Psoas muscle (tissue), 8 donors: ENCODE measurements at regions of chr19 and their contacts with region 1.

Region 1: GRCh38 chr19:57389730-57390598 is at the start of gene ZNF548:
- DNase-seq: peak; percentile 97 to 98
- ATAC-seq: peak; percentile 99
- H3K4me3 ChIP-seq: peak within 1 kb of the TSS; percentile 90
- H3K27ac ChIP-seq: peak within 1 kb of the TSS; percentile 93
- H3K4me1 ChIP-seq: peaks cover 7% of the 10 kb centered on the region
- H3K27me3 ChIP-seq: no peaks in the 10 kb centered on the region
- CTCF ChIP-seq: peak; percentile 24
- total RNA-seq, gene ZNF548: 5.6 to 12.1 (median 8.3) TPM

Region 2: DNA sequence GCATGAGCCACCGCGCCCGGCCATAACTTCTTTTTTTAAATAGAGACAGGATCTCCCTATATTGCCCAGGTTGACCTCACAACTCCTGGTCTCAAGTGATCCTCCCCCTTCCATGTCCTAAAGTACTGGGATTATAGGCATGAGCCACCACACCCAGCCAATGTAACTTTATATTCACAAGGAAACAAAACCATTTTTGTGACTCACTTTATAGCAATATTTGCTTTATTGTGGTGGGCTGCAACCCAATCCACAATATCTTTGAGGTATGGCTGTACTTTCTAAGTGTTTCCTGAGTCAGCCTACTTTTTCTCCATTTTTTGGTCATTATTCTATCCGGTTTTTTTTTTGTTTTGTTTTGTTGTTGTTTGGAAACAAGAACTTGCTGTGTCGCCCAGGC is 237.0 kb before region 1 on chr19:
- intact Hi-C with region 1: no loop called
- DNase-seq: no peak
- ATAC-seq: no peak
- H3K4me3 ChIP-seq: no peak overlapping the region
- H3K27ac ChIP-seq: no peak overlapping the region
- H3K4me1 ChIP-seq: no peaks in the 10 kb centered on the region
- H3K27me3 ChIP-seq: no peaks in the 10 kb centered on the region
- CTCF ChIP-seq: no peak

Region 3: DNA sequence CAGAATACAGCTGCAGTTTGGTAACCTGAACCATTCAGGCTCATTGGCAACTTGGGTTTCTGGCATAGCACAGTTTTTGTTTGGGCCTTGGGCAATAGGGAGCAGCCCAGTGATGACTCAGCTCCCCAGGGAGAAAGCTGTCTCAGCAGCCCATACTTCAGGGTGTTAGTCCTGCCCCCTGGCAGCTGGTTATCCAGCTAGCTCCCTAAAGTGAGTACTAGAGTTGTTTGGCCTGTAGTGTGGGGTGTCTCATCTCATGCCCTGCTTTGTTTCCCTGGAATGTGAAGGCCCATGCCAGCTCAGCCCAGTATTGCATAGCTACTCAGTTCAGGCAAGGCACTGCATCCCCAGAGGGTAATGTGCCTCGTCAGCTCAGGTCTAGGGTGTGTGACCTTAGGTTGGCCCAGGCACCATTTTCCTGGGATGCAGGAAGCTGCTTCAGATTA is 87.9 kb before region 1 on chr19:
- intact Hi-C with region 1: no loop called
- DNase-seq: peak; percentile 74 to 89
- ATAC-seq: peak; percentile 96 to 98 (median 97)
- H3K4me3 ChIP-seq: no peak overlapping the region
- H3K27ac ChIP-seq: peak overlapping the region; percentile 68
- H3K4me1 ChIP-seq: peaks cover 19% of the 10 kb centered on the region
- H3K27me3 ChIP-seq: no peaks in the 10 kb centered on the region
- CTCF ChIP-seq: no peak

Region 4: DNA sequence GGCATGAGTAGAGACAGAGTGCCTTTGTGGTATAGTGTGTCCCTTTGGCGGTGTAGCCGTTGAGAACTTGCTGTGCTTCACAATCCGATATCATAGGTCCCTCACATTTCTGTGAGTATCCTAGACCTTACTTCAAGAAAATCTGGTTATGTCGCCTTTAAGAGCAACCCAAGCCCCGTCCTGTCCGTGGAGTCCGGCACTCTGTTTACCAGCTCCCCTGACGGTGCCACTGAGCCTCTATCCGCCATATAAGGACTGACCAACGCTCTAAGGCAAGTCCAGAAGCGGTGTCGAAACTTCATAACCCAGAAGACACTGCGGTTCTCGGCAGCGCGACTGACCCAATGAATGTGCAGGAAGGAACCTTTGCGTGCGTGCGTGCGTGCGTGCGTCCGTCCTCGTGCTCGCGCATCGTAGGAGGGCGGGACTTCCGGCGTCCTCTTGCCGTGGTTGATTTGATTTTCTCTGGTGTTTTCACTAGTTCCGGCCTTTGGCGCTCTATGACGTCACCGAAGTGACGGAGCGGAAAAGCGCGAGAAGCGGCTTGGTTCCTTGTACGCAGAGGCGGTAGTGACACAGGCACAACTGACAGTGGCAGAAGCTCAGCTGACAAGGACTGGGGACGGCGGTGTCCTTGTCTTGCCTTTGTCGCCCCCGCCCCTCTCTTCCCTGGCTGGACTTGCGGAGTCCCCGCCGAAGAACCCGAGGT is 26.8 kb before region 1 on chr19 and contains the starts of genes TRAPPC2B and ZNF547:
- intact Hi-C with region 1: loop called in 1 of 2 experiments (anchors 2 kb)
- DNase-seq: peak; percentile 99 to 100
- ATAC-seq: peak; percentile 94 to 96 (median 95)
- H3K4me3 ChIP-seq: peak within 1 kb of the TSS; percentile 91
- H3K27ac ChIP-seq: peak within 1 kb of the TSS; percentile 98
- H3K4me1 ChIP-seq: no peaks in the 10 kb centered on the region
- H3K27me3 ChIP-seq: no peaks in the 10 kb centered on the region
- CTCF ChIP-seq: no peak
- total RNA-seq, gene TRAPPC2B: 12.6 to 21.3 (median 17.5) TPM
- total RNA-seq, gene ZNF547: 1.1 to 2.8 (median 1.9) TPM